IMR-90 (cell line): ENCODE measurements at regions of chr15 and their contacts with region 1.

Region 1: GRCh38 chr15:34587717-34588674 is 4.5 kb upstream of the GOLGA8B start:
- DNase-seq: peak; percentile 80
- ATAC-seq: peak; percentile 79
- H3K4me3 ChIP-seq: peak overlapping the region; percentile 32; the same call in 1 of the 2 replicates
- H3K27ac ChIP-seq: no peak overlapping the region
- H3K4me1 ChIP-seq: peaks cover 3% of the 10 kb centered on the region; the same call in 1 of the 2 replicates
- H3K27me3 ChIP-seq: peaks cover 4% of the 10 kb centered on the region
- CTCF ChIP-seq: peak; percentile 89
- POLR2A ChIP-seq: peak; percentile 90
- RAD21 ChIP-seq: peak; percentile 92

Region 2: GRCh38 chr15:34101366-34102175 is 486.4 kb before region 1 on chr15 and contains the starts of genes EMC7 and PGBD4:
- CTCF ChIA-PET with region 1: no interaction called
- POLR2A ChIA-PET with region 1: no interaction called
- dilution Hi-C with region 1: no loop called
- in situ Hi-C with region 1: loop called (anchors 25 kb)
- intact Hi-C with region 1: no loop called
- DNase-seq: peak; percentile 100
- ATAC-seq: peak; percentile 99
- H3K4me3 ChIP-seq: peak within 1 kb of the TSS; percentile 76
- H3K27ac ChIP-seq: peak within 1 kb of the TSS; percentile 88
- H3K4me1 ChIP-seq: peaks cover 4% of the 10 kb centered on the region; the same call in 1 of the 2 replicates
- H3K27me3 ChIP-seq: no peaks in the 10 kb centered on the region
- CTCF ChIP-seq: no peak
- POLR2A ChIP-seq: peak; percentile 93
- RAD21 ChIP-seq: no peak
- total RNA-seq, gene EMC7: 46.6 and 58.6 TPM in 2 replicates
- total RNA-seq, gene PGBD4: 1.3 and 1.9 TPM in 2 replicates

Region 3: DNA sequence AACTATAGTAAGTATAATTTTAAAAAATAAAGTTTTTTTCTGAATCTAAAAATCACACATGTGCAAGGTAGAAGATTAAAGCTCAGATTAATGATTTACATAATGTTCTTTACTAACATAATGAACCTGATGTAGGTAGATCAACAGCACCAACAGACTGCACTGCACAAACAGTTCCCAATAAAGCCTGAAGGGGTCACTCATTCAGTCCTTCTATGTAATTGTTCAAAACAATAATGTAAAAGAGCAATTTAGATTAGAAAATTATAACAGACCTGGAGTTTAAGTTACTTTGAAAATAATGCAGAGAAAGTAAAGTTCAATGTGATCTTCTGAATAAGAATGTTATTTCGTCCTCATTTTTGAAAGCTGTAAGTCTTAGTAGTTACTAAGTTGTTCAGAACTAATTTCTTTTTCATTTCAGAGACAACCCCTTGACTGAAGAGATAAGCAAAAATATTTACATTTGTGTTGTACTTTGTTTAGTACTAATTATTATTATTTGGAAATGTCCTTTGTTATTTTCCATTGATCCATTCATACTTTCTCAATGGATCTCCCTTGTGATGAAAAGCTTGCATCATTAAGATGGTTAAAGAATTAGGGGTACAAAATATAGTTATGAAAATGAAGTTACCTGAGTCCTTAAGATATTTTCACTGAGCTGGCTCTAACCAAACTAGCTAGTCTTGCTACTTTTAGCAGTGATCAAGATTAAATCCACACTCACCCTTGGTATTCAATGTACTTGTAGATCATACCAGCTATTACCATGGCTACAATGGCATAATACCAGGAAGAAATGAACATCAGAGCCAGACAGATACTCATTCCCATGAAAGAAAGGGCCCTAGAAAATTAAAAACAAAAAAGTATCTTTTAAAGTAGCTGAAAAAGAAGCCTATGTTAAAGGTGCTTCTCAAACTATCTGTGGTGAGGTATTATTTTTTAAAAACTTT is 346.3 kb before region 1 on chr15:
- CTCF ChIA-PET with region 1: interaction called, 5 read pairs
- POLR2A ChIA-PET with region 1: no interaction called
- dilution Hi-C with region 1: no loop called
- in situ Hi-C with region 1: loop called (anchors 25 kb)
- intact Hi-C with region 1: loop called (anchors 1 kb)
- DNase-seq: peak; percentile 51
- ATAC-seq: peak; percentile 59
- H3K4me3 ChIP-seq: no peak overlapping the region
- H3K27ac ChIP-seq: no peak overlapping the region
- H3K4me1 ChIP-seq: peaks cover 4% of the 10 kb centered on the region
- H3K27me3 ChIP-seq: no peaks in the 10 kb centered on the region
- CTCF ChIP-seq: peak; percentile 65
- POLR2A ChIP-seq: no peak
- RAD21 ChIP-seq: peak; percentile 47

Region 4: GRCh38 chr15:34347951-34348638 is 239.9 kb before region 1 on chr15:
- CTCF ChIA-PET with region 1: interaction called, 4 read pairs
- POLR2A ChIA-PET with region 1: no interaction called
- dilution Hi-C with region 1: no loop called
- in situ Hi-C with region 1: loop called (anchors 5 kb)
- intact Hi-C with region 1: loop called (anchors 1 kb)
- DNase-seq: no peak
- ATAC-seq: no peak
- H3K4me3 ChIP-seq: no peak overlapping the region
- H3K27ac ChIP-seq: no peak overlapping the region
- H3K4me1 ChIP-seq: no peaks in the 10 kb centered on the region
- H3K27me3 ChIP-seq: no peaks in the 10 kb centered on the region
- CTCF ChIP-seq: no peak
- POLR2A ChIP-seq: no peak
- RAD21 ChIP-seq: no peak

Region 5: DNA sequence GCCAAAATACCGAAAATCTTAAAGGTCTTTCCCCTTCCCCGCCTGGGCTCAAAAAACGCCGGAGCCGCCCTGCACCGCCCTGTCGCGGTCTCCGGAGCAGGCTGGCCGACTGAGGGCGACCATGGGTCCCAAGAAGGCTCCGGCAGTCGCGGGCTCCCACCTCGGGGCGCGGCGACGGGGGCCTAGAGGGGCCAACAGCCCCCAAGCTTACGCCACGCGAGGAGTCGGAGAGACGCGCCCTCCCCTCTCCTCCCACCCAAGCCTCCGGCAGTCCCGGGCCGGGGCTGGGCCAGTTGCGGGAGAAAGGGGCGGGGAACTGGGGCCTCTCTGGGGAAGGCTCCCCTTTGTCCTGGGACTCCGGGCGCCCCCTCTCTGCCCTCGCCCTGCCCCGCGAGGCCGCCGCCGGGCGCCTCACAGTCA is 73.7 kb before region 1 on chr15:
- CTCF ChIA-PET with region 1: no interaction called
- POLR2A ChIA-PET with region 1: no interaction called
- dilution Hi-C with region 1: no loop called
- in situ Hi-C with region 1: no loop called
- intact Hi-C with region 1: no loop called
- DNase-seq: no peak
- ATAC-seq: peak; percentile 81
- H3K4me3 ChIP-seq: peak overlapping the region; percentile 49
- H3K27ac ChIP-seq: no peak overlapping the region; the same call in 1 of the 2 replicates
- H3K4me1 ChIP-seq: no peaks in the 10 kb centered on the region
- H3K27me3 ChIP-seq: peaks cover 15% of the 10 kb centered on the region
- CTCF ChIP-seq: no peak
- POLR2A ChIP-seq: no peak
- RAD21 ChIP-seq: no peak